Activated CD8-positive, alpha-beta T cell treated with anti-CD3 and anti-CD28 coated beads, Interleukin-2, amount 10 ng/mL, durations not matched to agents 7 days and 5 days (primary cell): ENCODE measurements at regions of chr3 and their contacts with region 1.

Region 1: GRCh38 chr3:46078712-46079400 is 51.6 kb upstream of the XCR1 start:
- DNase-seq: peak; percentile 95
- ATAC-seq: peak; percentile 99
- H3K4me3 Mint-ChIP-seq: peak overlapping the region; percentile 29
- H3K27ac Mint-ChIP-seq: peak overlapping the region; percentile 58
- H3K4me1 Mint-ChIP-seq: peaks cover 70% of the 10 kb centered on the region
- H3K27me3 Mint-ChIP-seq: no peaks in the 10 kb centered on the region

Region 2: GRCh38 chr3:45929042-45929679 is 149.7 kb before region 1 on chr3:
- CTCF ChIA-PET with region 1: interaction called, 87 read pairs
- POLR2A ChIA-PET with region 1: no interaction called
- DNase-seq: peak; percentile 77
- ATAC-seq: peak; percentile 92
- H3K4me3 Mint-ChIP-seq: no peak overlapping the region
- H3K27ac Mint-ChIP-seq: peak overlapping the region; percentile 55
- H3K4me1 Mint-ChIP-seq: peaks cover 5% of the 10 kb centered on the region
- H3K27me3 Mint-ChIP-seq: no peaks in the 10 kb centered on the region

Region 3: GRCh38 chr3:45972534-45973402 is 106.1 kb before region 1 on chr3:
- CTCF ChIA-PET with region 1: interaction called, 171 read pairs
- POLR2A ChIA-PET with region 1: no interaction called
- DNase-seq: no peak
- ATAC-seq: peak; percentile 29
- H3K4me3 Mint-ChIP-seq: peak overlapping the region; percentile 25
- H3K27ac Mint-ChIP-seq: peak overlapping the region; percentile 79
- H3K4me1 Mint-ChIP-seq: peaks cover 90% of the 10 kb centered on the region
- H3K27me3 Mint-ChIP-seq: no peaks in the 10 kb centered on the region

Region 4: GRCh38 chr3:46017720-46018119 is 61.1 kb before region 1 on chr3:
- CTCF ChIA-PET with region 1: interaction called, 16 read pairs
- POLR2A ChIA-PET with region 1: interaction called, 3 read pairs
- DNase-seq: peak; percentile 17
- ATAC-seq: no peak
- H3K4me3 Mint-ChIP-seq: no peak overlapping the region
- H3K27ac Mint-ChIP-seq: no peak overlapping the region
- H3K4me1 Mint-ChIP-seq: peaks cover 43% of the 10 kb centered on the region
- H3K27me3 Mint-ChIP-seq: peaks cover 2% of the 10 kb centered on the region

Region 5: DNA sequence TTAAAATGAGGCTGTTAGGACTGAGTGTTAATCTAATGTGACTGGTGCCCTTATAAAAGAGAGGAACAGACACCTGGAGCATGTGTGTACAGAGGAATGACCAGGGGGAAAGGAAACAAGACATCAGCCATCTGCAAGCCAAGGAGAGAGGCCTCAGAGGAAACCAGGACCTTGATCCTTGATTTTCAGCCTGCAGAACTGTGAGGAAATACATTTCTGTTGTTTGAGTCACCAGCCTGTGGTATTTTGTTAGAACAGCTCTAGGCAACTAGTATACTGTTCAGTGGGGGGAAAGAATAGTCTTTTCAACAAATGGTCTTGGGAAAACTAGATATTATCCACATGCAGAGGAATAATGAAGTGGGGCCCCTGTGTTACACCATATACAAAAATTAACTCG is 48.6 kb after region 1 on chr3:
- CTCF ChIA-PET with region 1: no interaction called
- POLR2A ChIA-PET with region 1: no interaction called
- DNase-seq: no peak
- ATAC-seq: no peak
- H3K4me3 Mint-ChIP-seq: no peak overlapping the region
- H3K27ac Mint-ChIP-seq: no peak overlapping the region
- H3K4me1 Mint-ChIP-seq: peaks cover 52% of the 10 kb centered on the region
- H3K27me3 Mint-ChIP-seq: peaks cover 13% of the 10 kb centered on the region

Region 6: GRCh38 chr3:46208167-46208704 is 129.4 kb after region 1 on chr3 and contains the start of gene CCR1:
- CTCF ChIA-PET with region 1: interaction called, 150 read pairs
- POLR2A ChIA-PET with region 1: no interaction called
- DNase-seq: peak; percentile 85
- ATAC-seq: peak; percentile 69
- H3K4me3 Mint-ChIP-seq: peak within 1 kb of the TSS; percentile 87
- H3K27ac Mint-ChIP-seq: peak within 1 kb of the TSS; percentile 95
- H3K4me1 Mint-ChIP-seq: peaks cover 73% of the 10 kb centered on the region
- H3K27me3 Mint-ChIP-seq: no peaks in the 10 kb centered on the region
- total RNA-seq, gene CCR1: 41.4 to 41.5 TPM

Region 7: DNA sequence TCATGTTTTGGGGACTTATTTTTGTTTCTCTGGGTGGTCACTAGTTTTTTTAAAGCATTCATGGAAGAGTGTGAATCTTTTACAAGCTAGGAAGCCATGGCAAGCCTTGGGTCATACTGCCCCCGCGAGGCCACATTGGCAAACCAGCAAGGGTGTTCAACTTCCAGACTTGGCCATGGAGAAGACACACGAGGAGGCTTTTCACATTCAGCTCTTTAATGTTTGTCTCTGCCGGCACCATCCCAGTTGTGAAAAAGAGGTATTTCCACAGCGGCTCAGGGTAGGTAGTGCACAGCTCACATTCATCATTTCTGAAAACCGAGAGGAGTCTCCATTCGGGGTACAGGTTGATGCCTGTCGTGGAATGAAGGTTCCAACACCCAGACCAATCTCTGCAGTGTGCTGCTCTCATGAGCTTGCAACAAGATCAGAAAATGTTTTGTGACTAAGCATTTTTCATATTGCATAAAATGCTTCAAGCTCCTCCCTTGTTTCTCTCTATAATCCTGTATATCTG is 299.6 kb after region 1 on chr3:
- CTCF ChIA-PET with region 1: interaction called, 287 read pairs
- POLR2A ChIA-PET with region 1: interaction called, 4 read pairs
- DNase-seq: peak; percentile 82
- ATAC-seq: peak; percentile 50
- H3K4me3 Mint-ChIP-seq: no peak overlapping the region
- H3K27ac Mint-ChIP-seq: no peak overlapping the region
- H3K4me1 Mint-ChIP-seq: peaks cover 76% of the 10 kb centered on the region
- H3K27me3 Mint-ChIP-seq: no peaks in the 10 kb centered on the region